Lower lobe of right lung (tissue), 2 donors: ENCODE measurements at regions of chr19 and their contacts with region 1.

Region 1: GRCh38 chr19:12847159-12848139 is 9.1 kb downstream of the MAST1 start:
- DNase-seq: peak; percentile 92
- ATAC-seq: peak; percentile 98 to 99
- H3K4me3 ChIP-seq: peak overlapping the region; percentile 31
- H3K27ac ChIP-seq: no peak overlapping the region
- H3K4me1 ChIP-seq: peaks cover 7% of the 10 kb centered on the region
- H3K27me3 ChIP-seq: peaks cover 43% of the 10 kb centered on the region
- CTCF ChIP-seq: peak; percentile 99

Region 2: DNA sequence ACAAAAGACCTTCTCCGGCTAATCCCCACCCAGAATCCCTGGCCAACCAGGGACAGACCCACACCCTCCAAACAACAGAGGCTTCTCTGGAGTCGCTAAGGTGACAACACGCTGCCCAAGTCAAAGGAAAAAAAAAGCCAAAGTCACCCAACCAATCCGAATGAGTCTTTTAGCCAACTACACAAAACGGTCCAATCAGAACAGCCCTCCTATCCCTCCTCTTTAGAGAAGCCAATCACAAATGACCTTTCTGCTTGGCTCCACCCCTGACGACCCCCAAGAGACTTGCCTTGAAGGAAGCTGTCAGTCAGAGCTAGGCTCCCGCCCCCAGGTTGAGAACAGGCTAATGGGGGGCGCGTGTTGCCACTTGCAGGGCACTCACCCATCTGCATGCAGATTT is 144.4 kb before region 1 on chr19:
- intact Hi-C with region 1: no loop called
- DNase-seq: no peak
- ATAC-seq: no peak
- H3K4me3 ChIP-seq: no peak overlapping the region
- H3K27ac ChIP-seq: no peak overlapping the region
- H3K4me1 ChIP-seq: no peaks in the 10 kb centered on the region
- H3K27me3 ChIP-seq: no peaks in the 10 kb centered on the region
- CTCF ChIP-seq: no peak

Region 3: DNA sequence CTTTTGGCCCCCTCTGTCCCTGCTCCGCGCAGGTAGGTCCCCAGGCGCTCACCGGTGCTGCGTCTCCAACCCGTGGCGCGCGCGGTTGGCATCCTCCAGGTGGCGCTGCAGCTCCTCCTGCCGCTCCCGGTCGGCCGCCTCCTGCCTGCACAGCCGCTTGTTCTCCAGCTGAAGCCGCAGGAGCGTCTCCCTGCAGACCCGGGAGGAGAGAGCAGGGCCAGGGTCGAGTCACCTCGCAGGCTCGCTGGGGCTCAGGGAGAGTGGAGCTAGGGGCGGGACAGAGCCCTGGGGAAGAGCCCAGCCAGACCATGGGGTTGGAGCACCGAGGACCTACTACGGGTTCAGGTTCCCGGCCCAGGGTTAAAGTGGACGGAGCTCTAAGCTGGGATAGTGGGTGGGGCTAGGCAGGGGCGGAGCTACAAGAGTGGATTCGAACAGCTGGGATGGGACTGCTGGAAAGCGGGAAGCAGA is 81.4 kb before region 1 on chr19:
- intact Hi-C with region 1: loop called (anchors 10 kb)
- DNase-seq: peak; percentile 93
- ATAC-seq: peak; percentile 83 to 93
- H3K4me3 ChIP-seq: peak overlapping the region; percentile 59
- H3K27ac ChIP-seq: peak overlapping the region; percentile 44
- H3K4me1 ChIP-seq: peaks cover 5% of the 10 kb centered on the region
- H3K27me3 ChIP-seq: no peaks in the 10 kb centered on the region
- CTCF ChIP-seq: peak; percentile 96

Region 4: DNA sequence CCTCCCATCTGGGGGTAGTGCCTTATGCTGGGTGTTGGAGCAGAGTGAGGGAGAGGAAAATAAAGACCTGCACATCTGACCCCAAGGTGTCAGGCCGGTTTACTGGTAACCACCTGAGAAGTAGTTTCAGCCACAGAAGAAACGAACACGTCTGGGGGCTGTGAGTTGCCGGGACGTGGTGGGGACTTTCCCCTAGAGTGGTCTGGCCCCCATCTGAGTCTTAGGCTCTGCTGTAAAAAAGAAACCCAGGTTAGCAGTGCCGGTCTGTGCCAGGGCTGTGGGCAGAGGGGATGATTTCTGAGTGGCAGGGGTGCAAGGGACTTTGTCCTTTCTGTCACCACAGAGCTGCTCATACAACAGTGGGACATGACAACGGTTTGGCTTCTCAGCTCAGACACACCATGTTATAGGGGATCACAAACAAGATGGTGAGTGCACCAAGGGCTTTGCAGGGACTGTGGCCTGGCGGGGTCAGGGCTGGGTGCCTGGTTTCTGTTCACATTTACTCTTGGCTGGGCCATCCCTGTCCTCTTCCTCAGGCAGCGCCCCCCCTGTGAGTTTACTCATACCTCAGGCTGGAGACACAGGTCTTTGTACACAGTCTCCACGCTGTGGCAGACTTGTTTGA is 52.6 kb after region 1 on chr19:
- intact Hi-C with region 1: no loop called
- DNase-seq: no peak
- ATAC-seq: no peak
- H3K4me3 ChIP-seq: no peak overlapping the region
- H3K27ac ChIP-seq: no peak overlapping the region
- H3K4me1 ChIP-seq: no peaks in the 10 kb centered on the region
- H3K27me3 ChIP-seq: no peaks in the 10 kb centered on the region
- CTCF ChIP-seq: no peak

Region 5: DNA sequence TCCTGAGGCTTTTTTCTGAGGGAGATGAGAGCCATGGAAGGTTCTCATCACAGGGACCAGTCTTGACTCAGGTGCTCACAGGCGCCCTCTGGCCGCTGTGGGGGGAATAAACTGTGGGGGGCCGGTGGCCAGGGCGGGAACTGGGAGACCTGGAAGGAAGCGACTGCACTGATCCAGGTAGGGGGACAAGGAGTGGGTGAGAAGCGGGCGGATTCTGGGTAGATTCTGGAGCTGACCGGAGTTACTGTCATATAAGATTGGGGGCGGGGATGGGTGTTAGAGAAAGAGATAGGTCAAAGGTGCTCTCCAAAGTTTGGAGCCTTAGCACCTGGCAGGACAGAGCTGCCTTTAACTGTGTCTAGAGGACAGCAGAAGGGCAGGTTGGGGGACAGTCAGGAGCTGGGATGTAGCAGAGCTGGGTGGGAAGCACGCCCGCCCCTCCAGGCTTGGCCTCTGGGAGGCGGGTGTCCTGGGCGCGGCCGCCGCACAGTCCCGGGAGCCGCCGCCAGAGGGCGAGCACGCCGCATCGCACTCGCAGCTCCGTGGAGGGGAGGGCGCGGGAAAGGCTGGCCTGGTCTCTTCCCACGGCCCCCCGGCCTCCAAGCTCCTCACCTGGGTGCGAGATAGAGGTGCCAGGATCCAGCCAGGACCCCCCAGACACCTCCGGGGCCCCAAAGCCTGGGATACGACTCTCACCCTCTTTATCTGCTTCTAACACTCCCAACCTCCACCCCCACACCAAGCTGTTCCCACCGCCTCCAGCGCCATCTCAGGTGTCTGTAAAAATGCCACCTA is 117.8 kb after region 1 on chr19:
- intact Hi-C with region 1: no loop called
- DNase-seq: peak; percentile 87
- ATAC-seq: peak; percentile 97 to 99
- H3K4me3 ChIP-seq: peak overlapping the region; percentile 60
- H3K27ac ChIP-seq: peak overlapping the region; percentile 66
- H3K4me1 ChIP-seq: peaks cover 9% of the 10 kb centered on the region
- H3K27me3 ChIP-seq: no peaks in the 10 kb centered on the region
- CTCF ChIP-seq: peak; percentile 90